Vagina (tissue), 2 donors: ENCODE measurements at regions of chr17 and their contacts with region 1.

Region 1: GRCh38 chr17:77331301-77331864 is 190.6 kb downstream of the SEC14L1 start:
- DNase-seq: peak; percentile 89 to 97
- H3K4me3 ChIP-seq: peak overlapping the region in 1 of 2 donors; percentile 27
- H3K27ac ChIP-seq: peak overlapping the region; percentile 74
- H3K4me1 ChIP-seq: peaks cover 32% of the 10 kb centered on the region
- H3K27me3 ChIP-seq: no peaks in the 10 kb centered on the region
- CTCF ChIP-seq: peak; percentile 86 to 97 (median 94)
- POLR2A ChIP-seq: no peak

Region 2: GRCh38 chr17:77297693-77298666 is 33.4 kb before region 1 on chr17:
- intact Hi-C with region 1: no loop called
- DNase-seq: no peak
- H3K4me3 ChIP-seq: no peak overlapping the region
- H3K27ac ChIP-seq: no peak overlapping the region
- H3K4me1 ChIP-seq: no peaks in the 10 kb centered on the region
- H3K27me3 ChIP-seq: no peaks in the 10 kb centered on the region
- CTCF ChIP-seq: no peak
- POLR2A ChIP-seq: no peak

Region 3: DNA sequence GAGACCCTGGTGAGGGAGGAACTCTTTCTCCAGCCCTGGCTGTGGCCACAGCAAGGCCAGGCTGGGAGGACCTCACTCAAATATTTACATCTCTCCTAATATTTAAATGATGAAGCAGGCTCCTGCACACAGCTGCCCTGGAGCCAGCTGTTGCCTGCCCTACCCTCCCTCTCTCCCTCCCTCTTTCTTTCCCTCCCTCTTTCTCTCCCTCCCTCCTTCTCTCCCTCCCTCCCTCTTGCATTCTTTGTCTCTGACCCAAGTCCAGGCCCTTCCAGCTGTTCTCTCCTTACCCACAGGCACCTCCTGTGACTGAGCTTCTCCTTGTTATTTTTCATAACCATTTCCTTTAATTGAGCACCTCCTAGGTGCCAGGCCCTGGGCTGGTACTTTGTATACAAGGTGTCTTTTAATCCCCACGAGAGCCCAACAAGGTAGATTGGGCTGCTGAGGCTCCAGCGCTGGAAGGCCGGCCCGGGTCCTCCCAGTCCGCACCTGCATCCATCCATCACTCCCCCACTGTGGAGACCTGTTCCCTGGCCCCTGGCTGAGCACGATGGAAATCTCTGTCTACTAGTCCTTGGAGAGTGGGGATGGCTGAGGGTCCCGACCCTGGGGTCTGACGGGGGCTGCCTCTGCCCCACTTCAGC is 51.7 kb after region 1 on chr17:
- intact Hi-C with region 1: no loop called
- DNase-seq: no peak
- H3K4me3 ChIP-seq: no peak overlapping the region
- H3K27ac ChIP-seq: peak overlapping the region; percentile 95
- H3K4me1 ChIP-seq: peaks cover 99% of the 10 kb centered on the region
- H3K27me3 ChIP-seq: no peaks in the 10 kb centered on the region
- CTCF ChIP-seq: no peak
- POLR2A ChIP-seq: no peak

Region 4: GRCh38 chr17:77419547-77420094 is 88.2 kb after region 1 on chr17:
- intact Hi-C with region 1: no loop called
- DNase-seq: no peak
- H3K4me3 ChIP-seq: no peak overlapping the region
- H3K27ac ChIP-seq: peak overlapping the region; percentile 98
- H3K4me1 ChIP-seq: peaks cover 74% of the 10 kb centered on the region
- H3K27me3 ChIP-seq: no peaks in the 10 kb centered on the region
- CTCF ChIP-seq: no peak
- POLR2A ChIP-seq: no peak

Region 5: DNA sequence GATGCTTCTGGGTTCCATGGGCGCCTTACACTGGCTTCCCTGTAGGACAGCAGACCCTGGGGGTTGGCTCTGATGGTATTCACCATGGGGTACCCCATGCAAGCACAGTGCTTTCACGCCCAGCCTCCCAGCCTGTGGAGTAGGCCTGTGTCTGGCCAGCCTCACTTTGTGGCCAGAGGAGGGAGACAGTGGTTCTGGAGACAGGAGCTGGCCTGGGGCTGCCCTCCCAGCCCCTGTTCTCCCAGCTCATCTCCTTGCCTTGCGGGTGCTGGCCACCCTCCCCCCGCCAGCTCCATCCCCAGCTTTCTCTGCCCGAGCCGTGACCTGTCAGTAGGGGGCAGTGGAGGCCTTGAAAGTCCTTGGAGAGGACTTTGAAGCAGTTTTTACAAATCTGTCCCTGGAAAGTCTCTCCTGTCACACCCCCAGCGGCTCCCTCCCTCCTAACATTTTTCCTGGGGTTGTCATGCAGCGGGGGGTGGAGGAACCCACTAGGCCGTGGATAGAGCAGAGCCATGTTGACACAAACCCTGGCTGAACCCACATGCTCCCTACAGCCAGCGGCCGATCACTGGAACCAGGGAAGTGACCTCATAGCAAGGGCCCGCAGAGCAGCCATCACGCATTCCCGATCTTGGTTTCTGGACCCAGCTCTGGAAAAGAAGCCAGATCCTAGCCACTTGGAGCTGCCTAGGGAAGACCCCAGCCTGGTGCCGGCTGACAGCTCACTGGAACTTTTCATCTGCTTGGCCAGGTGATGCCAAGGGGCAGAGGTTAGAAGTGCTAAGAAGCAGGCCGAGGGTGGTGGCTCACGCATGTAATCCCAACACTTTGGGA is 98.8 kb after region 1 on chr17:
- intact Hi-C with region 1: loop called (anchors 5 kb)
- DNase-seq: peak in 1 of 2 donors; percentile 99
- H3K4me3 ChIP-seq: no peak overlapping the region
- H3K27ac ChIP-seq: peak overlapping the region; percentile 98
- H3K4me1 ChIP-seq: peaks cover 100% of the 10 kb centered on the region
- H3K27me3 ChIP-seq: no peaks in the 10 kb centered on the region
- CTCF ChIP-seq: peak; percentile 66 to 89 (median 74)
- POLR2A ChIP-seq: no peak

Region 6: GRCh38 chr17:77494664-77495435 is 163.5 kb after region 1 on chr17:
- intact Hi-C with region 1: loop called (anchors 2 kb)
- DNase-seq: no peak
- H3K4me3 ChIP-seq: no peak overlapping the region
- H3K27ac ChIP-seq: peak overlapping the region; percentile 74
- H3K4me1 ChIP-seq: peaks cover 25% of the 10 kb centered on the region
- H3K27me3 ChIP-seq: no peaks in the 10 kb centered on the region
- CTCF ChIP-seq: peak; percentile 97 to 99 (median 98)
- POLR2A ChIP-seq: no peak